IMR-90 (cell line): ENCODE measurements at regions of chr12 and their contacts with region 1.

Region 1: DNA sequence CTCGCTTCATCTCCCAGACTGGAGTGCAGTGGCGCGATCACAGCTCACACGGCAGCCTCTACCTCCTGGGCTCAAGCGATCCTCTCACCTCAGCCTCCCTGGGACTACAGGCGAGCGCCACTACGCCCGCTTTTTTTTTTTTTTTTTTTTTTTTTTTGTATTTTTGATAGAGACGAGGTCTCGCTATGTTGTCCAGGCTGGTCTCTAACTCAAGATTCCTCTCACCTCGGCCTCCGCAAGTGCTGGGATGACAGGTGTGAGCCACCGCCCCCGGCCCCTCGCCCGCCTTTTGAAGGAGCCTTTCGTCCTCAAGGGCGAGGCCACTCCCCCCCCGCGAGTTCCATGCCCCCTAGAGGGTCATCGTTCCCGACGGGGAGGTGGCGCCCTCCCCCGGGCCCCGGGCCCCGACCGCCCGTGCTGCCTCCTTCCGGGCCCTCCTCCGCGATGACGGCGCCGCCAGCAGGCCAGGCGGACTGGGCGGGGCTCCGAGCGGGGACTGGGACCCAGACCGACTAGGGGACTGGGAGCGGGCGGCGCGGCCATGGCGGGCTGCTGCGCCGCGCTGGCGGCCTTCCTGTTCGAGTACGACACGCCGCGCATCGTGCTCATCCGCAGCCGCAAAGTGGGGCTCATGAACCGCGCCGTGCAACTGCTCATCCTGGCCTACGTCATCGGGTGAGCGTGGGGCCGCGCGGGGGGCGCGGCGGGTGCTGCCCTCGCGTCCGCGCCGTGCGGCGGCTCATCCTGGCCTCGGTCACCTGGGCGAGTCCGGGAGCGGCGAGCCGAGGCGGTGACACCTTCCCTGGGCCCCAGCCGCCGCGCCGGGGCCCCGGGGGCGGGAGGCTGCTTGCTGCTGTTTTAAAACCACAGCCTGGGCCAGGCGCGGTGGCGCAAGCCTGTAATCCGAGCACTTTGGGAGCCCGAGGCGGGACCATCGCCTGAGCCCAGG is at the start of gene P2RX4:
- DNase-seq: peak; percentile 73
- ATAC-seq: peak; percentile 91
- H3K4me3 ChIP-seq: peak within 1 kb of the TSS; percentile 96
- H3K27ac ChIP-seq: peak within 1 kb of the TSS; percentile 78
- H3K4me1 ChIP-seq: peaks cover 6% of the 10 kb centered on the region
- H3K27me3 ChIP-seq: no peaks in the 10 kb centered on the region
- CTCF ChIP-seq: 0 out of 2 replicates have a peak, but pooled peaks have one; percentile 31
- POLR2A ChIP-seq: peak; percentile 88
- RAD21 ChIP-seq: 0 out of 2 replicates have a peak, but pooled peaks have one; percentile 6
- total RNA-seq, gene P2RX4: 8.3 and 9.5 TPM in 2 replicates

Region 2: DNA sequence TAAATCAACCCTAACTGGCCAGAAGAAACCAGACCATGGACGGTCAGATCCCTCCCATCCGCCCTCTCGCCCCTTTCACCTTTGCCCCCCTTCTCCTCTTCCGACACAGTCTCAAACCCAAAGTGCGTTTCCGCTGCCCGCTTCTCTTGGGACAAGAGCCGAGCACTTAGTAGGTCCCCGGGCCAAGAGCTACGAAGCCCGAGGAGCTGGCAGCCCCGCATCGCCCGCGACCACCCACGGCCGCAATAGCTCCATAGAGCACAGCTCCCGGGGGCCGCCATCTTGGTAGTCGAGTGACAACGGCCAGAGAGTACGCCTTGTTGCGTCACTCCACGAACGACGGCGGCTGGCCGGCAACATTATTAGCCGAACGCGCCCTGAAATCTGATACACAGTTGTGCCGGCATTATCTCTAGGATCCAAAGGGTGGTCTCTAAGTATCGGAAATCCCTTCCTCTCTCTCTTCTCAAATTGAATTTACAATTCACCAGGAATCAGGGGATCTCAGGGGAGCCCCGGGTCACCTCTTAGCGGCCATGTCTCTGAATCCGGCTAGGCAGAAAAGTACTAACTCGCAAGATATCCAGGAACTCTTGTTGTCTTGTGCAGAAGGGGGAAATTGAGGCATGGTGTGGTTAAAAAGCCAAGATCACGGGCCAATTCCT is 680.9 kb before region 1 on chr12 and contains the start of gene COQ5:
- CTCF ChIA-PET with region 1: no interaction called
- POLR2A ChIA-PET with region 1: no interaction called
- dilution Hi-C with region 1: no loop called
- in situ Hi-C with region 1: no loop called
- intact Hi-C with region 1: no loop called
- DNase-seq: peak; percentile 83
- ATAC-seq: peak; percentile 96
- H3K4me3 ChIP-seq: peak within 1 kb of the TSS; percentile 86
- H3K27ac ChIP-seq: peak within 1 kb of the TSS; percentile 95
- H3K4me1 ChIP-seq: peaks cover 2% of the 10 kb centered on the region; the same call in 1 of the 2 replicates
- H3K27me3 ChIP-seq: no peaks in the 10 kb centered on the region
- CTCF ChIP-seq: no peak
- POLR2A ChIP-seq: peak; percentile 82
- RAD21 ChIP-seq: no peak
- total RNA-seq, gene COQ5: 25.1 and 29.4 TPM in 2 replicates

Region 3: GRCh38 chr12:121110211-121110940 is 99.5 kb before region 1 on chr12:
- CTCF ChIA-PET with region 1: no interaction called
- POLR2A ChIA-PET with region 1: no interaction called
- dilution Hi-C with region 1: no loop called
- in situ Hi-C with region 1: no loop called
- intact Hi-C with region 1: loop called (anchors 5 kb)
- DNase-seq: peak; percentile 61
- ATAC-seq: peak; percentile 92
- H3K4me3 ChIP-seq: no peak overlapping the region
- H3K27ac ChIP-seq: no peak overlapping the region
- H3K4me1 ChIP-seq: no peaks in the 10 kb centered on the region
- H3K27me3 ChIP-seq: peaks cover 2% of the 10 kb centered on the region
- CTCF ChIP-seq: peak; percentile 88
- POLR2A ChIP-seq: no peak
- RAD21 ChIP-seq: peak; percentile 88

Region 4: GRCh38 chr12:121128970-121129810 is 80.7 kb before region 1 on chr12:
- CTCF ChIA-PET with region 1: no interaction called
- POLR2A ChIA-PET with region 1: no interaction called
- dilution Hi-C with region 1: no loop called
- in situ Hi-C with region 1: no loop called
- intact Hi-C with region 1: loop called (anchors 5 kb)
- DNase-seq: peak; percentile 27
- ATAC-seq: peak; percentile 33
- H3K4me3 ChIP-seq: no peak overlapping the region
- H3K27ac ChIP-seq: no peak overlapping the region
- H3K4me1 ChIP-seq: peaks cover 10% of the 10 kb centered on the region
- H3K27me3 ChIP-seq: peaks cover 12% of the 10 kb centered on the region
- CTCF ChIP-seq: no peak
- POLR2A ChIP-seq: no peak
- RAD21 ChIP-seq: no peak

Region 5: GRCh38 chr12:122799641-122800243 is 1589.8 kb after region 1 on chr12:
- CTCF ChIA-PET with region 1: no interaction called
- POLR2A ChIA-PET with region 1: interaction called, 15 read pairs
- dilution Hi-C with region 1: no loop called
- in situ Hi-C with region 1: no loop called
- intact Hi-C with region 1: no loop called
- DNase-seq: no peak
- ATAC-seq: no peak
- H3K4me3 ChIP-seq: no peak overlapping the region
- H3K27ac ChIP-seq: no peak overlapping the region
- H3K4me1 ChIP-seq: no peaks in the 10 kb centered on the region
- H3K27me3 ChIP-seq: no peaks in the 10 kb centered on the region
- CTCF ChIP-seq: no peak
- POLR2A ChIP-seq: no peak
- RAD21 ChIP-seq: no peak